ENCODE measurements at regions of chr19 and their contacts with region 1.

Region 1: GRCh38 chr19:3618144-3618810 is 8.3 kb downstream of the CACTIN start:
- DNase-seq: peak; percentile 80 to 88
- ATAC-seq: peak; percentile 82 to 93 (median 87)
- H3K4me3 ChIP-seq: no peak overlapping the region
- H3K27ac ChIP-seq: no peak overlapping the region
- H3K4me1 ChIP-seq: peaks cover 7% of the 10 kb centered on the region
- H3K27me3 ChIP-seq: no peaks in the 10 kb centered on the region
- CTCF ChIP-seq: peak; percentile 88

Region 2: DNA sequence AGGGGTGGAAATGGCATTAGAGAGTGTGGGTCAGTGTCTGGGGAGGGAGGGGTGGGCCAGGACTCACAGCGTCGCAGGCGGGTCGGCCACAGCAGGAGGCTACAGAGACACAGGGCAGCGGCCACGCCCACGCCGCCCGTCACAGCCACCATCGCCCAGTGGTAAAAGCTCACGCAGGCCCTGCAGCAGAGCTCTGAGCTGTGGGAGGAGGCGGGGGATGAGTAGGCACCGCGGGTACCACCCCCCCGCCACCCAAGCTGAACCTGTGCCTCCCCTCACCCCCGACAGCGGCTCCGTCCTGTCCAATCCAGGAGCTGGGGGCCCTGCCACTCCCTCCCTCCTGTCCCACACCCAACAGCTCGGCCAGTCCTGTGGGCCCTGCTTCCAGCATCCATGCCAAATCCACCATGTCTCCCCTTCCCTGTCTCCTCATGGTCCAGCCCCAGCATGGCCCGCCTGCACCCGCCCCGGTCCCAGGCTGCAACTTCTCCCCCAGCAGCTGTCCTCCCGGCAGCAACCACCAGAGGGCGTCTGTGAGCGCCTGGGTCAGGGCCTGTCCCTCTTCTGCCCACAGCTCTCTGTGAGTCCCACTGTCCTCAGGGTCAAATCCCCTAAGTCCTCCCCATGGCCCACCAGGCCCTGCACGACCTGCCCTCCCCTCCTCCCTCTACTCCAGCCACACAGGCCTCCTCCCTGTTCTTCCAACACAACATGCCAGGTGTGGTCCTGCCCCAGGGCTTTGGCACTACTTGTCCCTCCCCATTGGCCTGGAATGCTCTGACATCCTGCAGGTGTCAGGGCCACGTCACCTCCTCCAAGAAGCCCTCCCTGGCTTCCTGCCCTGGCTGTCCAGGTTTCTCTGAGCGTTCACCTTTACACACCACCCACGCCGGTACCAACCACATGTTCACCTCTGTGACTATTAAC is 73.3 kb before region 1 on chr19:
- intact Hi-C with region 1: loop called (anchors 2 kb)
- DNase-seq: peak; percentile 80 to 87
- ATAC-seq: peak; percentile 74 to 85 (median 80)
- H3K4me3 ChIP-seq: no peak overlapping the region
- H3K27ac ChIP-seq: no peak overlapping the region
- H3K4me1 ChIP-seq: no peaks in the 10 kb centered on the region
- H3K27me3 ChIP-seq: no peaks in the 10 kb centered on the region
- CTCF ChIP-seq: peak; percentile 93

Region 3: DNA sequence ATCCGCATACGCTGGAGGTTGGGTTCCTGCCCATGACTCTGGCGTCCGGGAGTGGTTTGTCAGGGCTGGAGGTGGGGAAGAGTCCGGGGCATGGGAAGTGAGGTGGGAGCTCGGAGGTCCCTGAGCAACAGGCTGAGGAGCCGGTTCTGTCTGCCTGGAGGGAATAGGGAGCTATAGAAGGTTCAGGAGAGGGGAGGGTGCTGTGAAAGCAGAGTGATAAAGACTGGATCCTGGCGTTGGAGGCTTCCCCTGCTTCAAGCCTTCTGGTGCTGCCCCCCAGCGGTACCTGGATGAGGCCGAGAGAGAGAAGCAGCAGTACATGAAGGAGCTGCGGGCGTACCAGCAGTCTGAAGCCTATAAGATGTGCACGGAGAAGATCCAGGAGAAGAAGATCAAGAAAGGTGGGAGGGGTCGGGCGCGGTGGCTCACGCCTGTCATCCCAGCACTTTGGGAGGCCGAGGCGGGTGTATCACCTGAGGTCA is 43.0 kb before region 1 on chr19:
- intact Hi-C with region 1: loop called (anchors 5 kb)
- DNase-seq: no peak
- ATAC-seq: no peak
- H3K4me3 ChIP-seq: no peak overlapping the region
- H3K27ac ChIP-seq: no peak overlapping the region
- H3K4me1 ChIP-seq: peaks cover 10% of the 10 kb centered on the region
- H3K27me3 ChIP-seq: no peaks in the 10 kb centered on the region
- CTCF ChIP-seq: no peak

Region 4: DNA sequence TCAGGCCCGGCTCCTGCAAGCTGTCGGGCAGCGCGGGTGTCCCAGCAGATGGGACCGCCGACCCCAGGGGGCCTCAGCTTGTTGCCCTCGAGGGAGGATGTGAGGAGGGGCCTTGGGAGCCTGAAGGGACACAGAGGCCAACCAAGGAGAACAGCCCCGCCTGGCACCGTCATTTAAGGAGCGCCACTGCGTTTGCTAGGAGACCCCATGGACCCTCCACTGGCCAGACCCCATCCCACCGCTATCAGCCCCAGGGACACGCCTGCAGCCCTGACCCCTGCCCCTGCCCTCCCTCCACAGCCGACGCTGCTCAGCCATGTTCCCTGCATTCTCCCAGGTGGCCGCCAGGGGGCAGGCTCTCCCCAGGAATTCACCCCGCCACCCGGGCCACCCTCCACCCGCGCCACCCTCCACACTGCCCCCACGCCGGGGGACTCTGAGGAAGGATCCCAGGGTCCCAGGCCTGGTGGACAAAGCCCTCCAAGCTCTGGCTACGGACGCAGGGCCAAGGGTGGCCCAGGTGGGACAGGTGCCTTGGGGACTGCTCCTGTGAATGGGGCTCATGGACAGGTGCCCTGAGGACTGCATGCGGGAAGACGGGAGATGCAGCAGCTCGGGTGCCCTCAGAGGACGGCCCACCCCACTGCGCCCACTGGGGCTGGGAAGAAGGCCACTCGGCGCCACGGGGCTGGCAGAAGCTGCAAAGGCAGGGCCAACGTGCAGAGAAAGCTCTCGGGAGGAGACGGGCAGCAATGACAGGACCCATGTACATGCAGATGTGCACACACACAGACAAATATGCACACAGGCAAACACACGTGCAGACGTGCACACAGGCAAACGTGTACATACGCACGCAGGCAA is 47.6 kb after region 1 on chr19:
- intact Hi-C with region 1: no loop called
- DNase-seq: peak; percentile 71 to 84
- ATAC-seq: peak; percentile 56 to 77 (median 72)
- H3K4me3 ChIP-seq: no peak overlapping the region
- H3K27ac ChIP-seq: peak overlapping the region; percentile 16
- H3K4me1 ChIP-seq: peaks cover 22% of the 10 kb centered on the region
- H3K27me3 ChIP-seq: no peaks in the 10 kb centered on the region
- CTCF ChIP-seq: peak; percentile 93

Measured in psoas muscle (tissue), 8 donors.